Mammary epithelial cell (primary cell): ENCODE measurements at regions of chr4 and their contacts with region 1.

Region 1: DNA sequence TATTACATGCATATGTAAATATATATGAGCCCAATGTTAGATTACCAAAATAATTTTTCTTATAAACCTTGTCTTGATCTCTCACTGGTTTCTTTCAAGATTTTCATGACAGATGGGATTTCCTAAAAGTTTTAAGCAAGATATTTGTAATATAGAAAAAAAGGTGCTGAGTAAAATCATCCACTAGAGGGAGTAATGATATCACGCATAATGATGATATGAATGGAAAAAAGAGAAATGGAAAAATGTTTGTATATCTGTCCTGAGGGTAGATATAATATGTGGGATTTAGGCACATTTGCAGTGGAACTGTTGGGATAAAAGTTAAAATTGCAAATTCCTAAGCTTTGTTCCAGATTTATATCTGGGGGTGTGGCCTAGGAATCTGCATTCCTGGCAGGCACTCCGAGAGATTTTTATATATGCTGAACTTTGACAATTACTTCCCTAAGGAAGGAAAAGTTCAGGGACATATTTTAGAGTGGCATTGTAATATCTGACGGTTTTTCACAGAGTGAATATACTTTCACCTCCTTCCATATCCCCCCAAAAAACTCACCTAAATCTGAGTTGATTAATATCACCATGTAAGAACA is 60.5 kb downstream of the TMA16 start:
- DNase-seq: peak; percentile 8
- H3K4me3 ChIP-seq: no peak overlapping the region
- H3K27ac ChIP-seq: no peak overlapping the region
- H3K4me1 ChIP-seq: peaks cover 11% of the 10 kb centered on the region
- H3K27me3 ChIP-seq: no peaks in the 10 kb centered on the region
- CTCF ChIP-seq: peak; percentile 65 to 68

Region 2: GRCh38 chr4:163681208-163681821 is 126.3 kb after region 1 on chr4:
- CTCF ChIA-PET with region 1: no interaction called
- dilution Hi-C with region 1: no loop called
- in situ Hi-C with region 1: loop called in 1 of 2 experiments (anchors 25 kb)
- intact Hi-C with region 1: loop called (anchors 2 kb)
- DNase-seq: no peak
- H3K4me3 ChIP-seq: no peak overlapping the region
- H3K27ac ChIP-seq: no peak overlapping the region
- H3K4me1 ChIP-seq: no peaks in the 10 kb centered on the region
- H3K27me3 ChIP-seq: no peaks in the 10 kb centered on the region
- CTCF ChIP-seq: peak; percentile 54 to 57

Region 3: DNA sequence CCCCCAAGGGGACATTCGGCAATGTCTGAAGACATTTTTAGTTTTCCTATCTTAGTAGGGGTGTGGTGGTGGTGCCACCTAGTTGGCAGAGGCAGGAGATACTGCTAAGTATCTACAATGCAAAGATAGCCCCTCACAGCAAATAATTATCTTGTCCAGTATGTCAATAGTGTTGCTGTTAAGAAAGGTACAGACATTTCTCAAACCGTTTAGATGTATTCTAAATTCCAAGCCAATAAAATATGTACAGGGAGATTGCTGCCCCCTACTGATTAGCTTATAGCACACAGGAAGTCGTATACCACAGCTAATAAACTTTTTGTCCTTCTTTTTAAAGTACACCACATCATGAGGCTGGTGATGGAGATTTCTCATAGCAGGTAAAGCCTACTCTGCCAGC is 200.0 kb after region 1 on chr4:
- CTCF ChIA-PET with region 1: interaction called, 4 read pairs
- dilution Hi-C with region 1: no loop called
- in situ Hi-C with region 1: loop called in 1 of 2 experiments (anchors 25 kb)
- intact Hi-C with region 1: loop called (anchors 1 kb)
- DNase-seq: peak; percentile 23
- H3K4me3 ChIP-seq: no peak overlapping the region
- H3K27ac ChIP-seq: no peak overlapping the region
- H3K4me1 ChIP-seq: no peaks in the 10 kb centered on the region
- H3K27me3 ChIP-seq: peaks cover 2% of the 10 kb centered on the region
- CTCF ChIP-seq: peak; percentile 47 to 60

Region 4: GRCh38 chr4:164027805-164028204 is 472.8 kb after region 1 on chr4:
- CTCF ChIA-PET with region 1: interaction called, 14 read pairs
- dilution Hi-C with region 1: no loop called
- in situ Hi-C with region 1: loop called in 1 of 2 experiments (anchors 25 kb)
- intact Hi-C with region 1: no loop called
- DNase-seq: no peak
- H3K4me3 ChIP-seq: no peak overlapping the region
- H3K27ac ChIP-seq: no peak overlapping the region
- H3K4me1 ChIP-seq: no peaks in the 10 kb centered on the region
- H3K27me3 ChIP-seq: no peaks in the 10 kb centered on the region
- CTCF ChIP-seq: no peak

Region 5: DNA sequence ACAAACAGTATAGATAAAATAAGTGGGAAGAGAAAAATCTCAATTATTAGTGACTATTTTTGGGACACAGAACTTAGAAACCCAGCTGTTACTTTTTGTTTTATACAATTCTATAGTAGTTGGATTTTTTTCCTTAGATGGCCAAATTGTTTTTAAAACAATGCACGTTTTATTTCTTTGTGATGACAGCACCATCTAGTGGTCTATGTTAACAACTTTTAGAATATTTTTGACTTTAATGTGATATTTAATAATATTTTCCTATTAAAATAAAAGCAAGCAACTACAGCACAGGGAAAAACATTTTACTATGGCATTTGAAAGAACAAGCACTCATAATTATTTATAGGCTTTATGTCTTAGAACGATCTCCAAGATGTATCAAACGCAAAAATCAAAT is 1193.4 kb after region 1 on chr4:
- CTCF ChIA-PET with region 1: no interaction called
- dilution Hi-C with region 1: no loop called
- in situ Hi-C with region 1: loop called in 1 of 2 experiments (anchors 10 kb)
- intact Hi-C with region 1: loop called (anchors 1 kb)
- DNase-seq: peak; percentile 7
- H3K4me3 ChIP-seq: no peak overlapping the region
- H3K27ac ChIP-seq: no peak overlapping the region
- H3K4me1 ChIP-seq: no peaks in the 10 kb centered on the region
- H3K27me3 ChIP-seq: no peaks in the 10 kb centered on the region
- CTCF ChIP-seq: peak; percentile 27 to 32

Region 6: DNA sequence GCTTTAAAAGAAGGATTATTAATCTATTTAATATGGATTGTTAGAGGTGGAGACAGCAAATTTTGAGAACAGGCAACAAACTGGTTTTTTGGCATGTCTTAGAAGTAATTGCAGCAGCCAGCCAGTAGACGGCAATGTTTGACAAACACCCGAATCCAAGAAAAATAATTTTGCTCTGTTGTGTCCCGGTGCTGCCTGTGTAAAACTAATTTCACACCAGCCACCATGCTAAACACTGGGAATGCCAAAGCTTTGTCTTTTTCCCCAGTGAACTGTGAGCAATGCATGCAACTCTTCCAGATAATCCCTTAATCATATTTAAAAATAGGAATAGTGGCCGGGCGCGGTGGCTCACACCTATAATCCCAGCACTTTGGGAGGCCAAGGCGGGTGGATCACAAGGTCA is 1224.8 kb after region 1 on chr4:
- CTCF ChIA-PET with region 1: interaction called, 12 read pairs
- dilution Hi-C with region 1: no loop called
- in situ Hi-C with region 1: no loop called
- intact Hi-C with region 1: no loop called
- DNase-seq: peak; percentile 17
- H3K4me3 ChIP-seq: no peak overlapping the region
- H3K27ac ChIP-seq: no peak overlapping the region
- H3K4me1 ChIP-seq: no peaks in the 10 kb centered on the region
- H3K27me3 ChIP-seq: no peaks in the 10 kb centered on the region
- CTCF ChIP-seq: peak; percentile 94 to 95